Left colon (tissue), 2 donors: ENCODE measurements at regions of chr3 and their contacts with region 1.

Region 1: DNA sequence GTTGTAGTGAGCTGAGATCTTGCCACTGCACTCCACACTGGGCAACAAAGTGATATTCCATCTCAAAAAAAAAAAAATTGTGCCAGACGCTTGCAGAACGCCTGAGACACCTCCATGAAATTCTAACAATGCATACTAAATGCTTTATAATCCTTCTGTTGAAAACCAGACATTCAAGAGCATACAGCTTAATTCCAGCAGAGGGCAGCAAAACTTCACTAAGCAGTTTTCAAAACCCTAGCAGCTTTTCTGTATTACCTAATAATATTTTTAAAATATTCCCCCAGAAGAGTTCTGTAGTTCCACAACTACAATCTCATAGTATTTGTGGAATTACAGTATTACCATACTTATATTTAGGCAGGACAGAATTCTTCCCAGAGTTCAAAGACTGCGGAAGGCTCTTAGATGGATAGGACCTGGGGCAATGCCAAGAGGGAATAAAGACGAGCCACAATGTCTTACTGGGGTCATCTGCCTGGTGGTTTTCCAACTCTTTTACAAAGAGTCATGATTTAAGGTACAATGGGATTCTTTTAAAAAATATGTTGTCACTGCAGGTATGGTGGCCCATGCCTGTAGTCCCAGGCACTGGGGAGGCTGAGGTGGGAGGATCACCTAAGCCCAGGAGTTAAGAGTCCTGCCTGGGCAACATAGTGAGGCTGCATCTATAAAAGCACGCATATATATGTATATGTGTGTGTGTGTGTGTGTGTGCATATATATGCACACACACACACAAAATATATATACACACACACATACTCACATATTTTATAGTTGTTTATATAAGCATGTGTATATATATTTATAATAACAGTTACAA is 19.6 kb upstream of the TASOR start:
- DNase-seq: peak in 1 of 2 donors; percentile 25
- ATAC-seq: peak; percentile 76

Region 2: DNA sequence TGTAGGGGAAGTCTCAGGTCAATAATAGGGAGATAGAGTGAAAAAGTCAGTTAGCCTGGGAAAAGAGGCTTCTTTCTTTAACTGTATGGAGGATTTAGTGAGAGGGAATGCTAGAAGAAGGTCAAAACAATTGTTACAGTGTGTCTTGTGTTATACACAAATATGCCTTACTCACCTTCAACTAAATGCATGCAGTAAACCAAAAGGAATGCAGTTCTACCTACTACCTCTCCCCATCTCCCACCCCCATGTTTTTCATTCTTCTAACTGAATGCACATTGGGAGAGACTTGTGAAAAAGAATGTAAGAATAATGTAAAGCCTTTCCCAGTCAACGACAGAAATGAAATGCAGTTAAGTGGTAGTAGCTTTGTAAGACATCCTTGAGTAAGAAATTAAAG is 111.9 kb before region 1 on chr3:
- intact Hi-C with region 1: no loop called
- DNase-seq: no peak
- ATAC-seq: no peak

Region 3: DNA sequence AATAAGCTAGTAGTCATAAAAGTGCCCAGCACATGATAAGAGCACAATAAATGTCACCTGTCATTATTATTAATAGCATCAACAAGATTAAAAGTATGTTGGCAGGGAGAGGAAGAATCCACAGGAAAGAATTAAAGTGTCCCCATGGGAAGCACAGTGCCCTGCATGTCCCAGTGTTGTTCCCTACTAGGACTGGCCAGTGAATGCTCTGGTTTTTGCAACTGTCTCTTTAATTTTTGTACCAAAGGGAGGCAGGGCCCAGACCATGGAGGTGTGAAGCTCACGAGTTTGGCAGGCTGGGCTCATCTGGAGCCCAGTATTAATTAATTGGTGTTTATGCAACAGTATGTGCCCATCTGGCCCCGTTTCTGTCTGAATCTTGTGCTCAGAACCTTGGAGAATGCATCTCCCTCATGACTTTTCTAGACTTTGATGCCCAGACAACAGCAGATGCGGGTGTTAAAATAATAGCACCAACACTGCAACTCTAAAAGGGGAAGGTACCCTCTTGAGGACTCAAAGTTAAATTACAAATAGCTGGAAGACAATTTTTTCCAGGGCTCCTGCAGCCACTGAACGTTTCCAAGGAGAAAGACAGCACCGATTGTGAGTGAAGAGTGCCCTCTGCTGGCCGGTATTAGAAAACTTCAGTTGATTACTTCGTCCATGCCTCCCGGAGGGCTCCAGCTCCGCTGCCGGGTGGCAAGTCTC is 285.9 kb after region 1 on chr3:
- intact Hi-C with region 1: loop called (anchors 2 to 5 kb)
- DNase-seq: peak; percentile 71 to 79
- ATAC-seq: peak; percentile 55